ENCODE measurements at regions of chr11 and their contacts with region 1.

Region 1: GRCh38 chr11:77187776-77188632 is 60.0 kb downstream of the MYO7A start:
- H3K4me3 ChIP-seq: no peak overlapping the region
- H3K27ac ChIP-seq: no peak overlapping the region
- H3K4me1 ChIP-seq: no peaks in the 10 kb centered on the region
- CTCF ChIP-seq: peak; percentile 43; the same call in 1 of the 2 replicates

Region 2: DNA sequence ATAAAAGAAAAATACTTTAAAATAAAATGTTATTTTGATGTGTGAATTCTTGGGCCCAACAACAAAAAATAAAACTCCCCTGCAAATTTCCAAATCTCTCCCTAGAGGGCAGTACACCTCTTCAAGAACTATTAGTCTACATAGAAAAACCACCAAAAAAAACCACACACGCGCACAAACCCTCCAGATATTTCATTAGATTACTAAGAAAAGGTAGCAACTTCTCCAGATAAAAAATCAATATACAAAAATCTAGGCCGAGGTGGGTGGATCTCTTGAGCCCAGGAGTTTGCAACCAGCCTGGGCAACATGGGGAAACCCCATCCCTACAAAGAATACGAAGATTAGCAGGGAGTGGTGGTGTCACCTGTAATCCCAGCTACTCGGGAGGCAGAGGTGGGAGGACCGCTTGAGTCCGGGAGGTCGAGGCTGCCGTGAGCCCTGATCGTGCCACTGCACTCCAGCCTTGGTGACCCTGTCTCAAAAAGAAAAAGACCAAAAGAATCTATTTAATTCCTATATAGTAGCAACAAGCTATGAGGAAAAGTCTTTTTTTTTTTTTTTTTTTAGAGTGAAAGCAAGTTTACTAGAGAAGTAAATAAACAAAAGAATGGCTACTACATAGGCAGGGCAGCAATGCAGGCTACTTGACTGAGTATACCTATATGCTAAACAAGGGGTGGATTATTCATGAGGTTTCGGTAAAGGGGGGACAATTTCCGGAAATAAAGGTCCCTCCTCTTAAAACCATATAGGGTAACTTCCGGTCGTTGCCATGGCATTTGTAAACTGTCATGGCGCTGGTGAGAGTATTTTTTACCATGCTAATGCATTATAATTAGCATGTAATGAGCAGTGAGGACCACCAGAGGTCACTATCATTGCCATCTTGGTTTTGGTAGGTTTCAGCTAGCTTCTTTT is 140.7 kb before region 1 on chr11:
- CTCF ChIA-PET with region 1: interaction called, 12 read pairs
- POLR2A ChIA-PET with region 1: no interaction called
- H3K4me3 ChIP-seq: peak overlapping the region; percentile 36
- H3K27ac ChIP-seq: no peak overlapping the region
- H3K4me1 ChIP-seq: no peaks in the 10 kb centered on the region
- CTCF ChIP-seq: peak; percentile 54

Region 3: GRCh38 chr11:77167111-77167626 is 20.8 kb before region 1 on chr11:
- CTCF ChIA-PET with region 1: interaction called, 12 read pairs
- POLR2A ChIA-PET with region 1: no interaction called
- H3K4me3 ChIP-seq: no peak overlapping the region
- H3K27ac ChIP-seq: no peak overlapping the region
- H3K4me1 ChIP-seq: no peaks in the 10 kb centered on the region
- CTCF ChIP-seq: no peak

Region 4: GRCh38 chr11:77202941-77203900 is 15.2 kb after region 1 on chr11:
- CTCF ChIA-PET with region 1: interaction called, 14 read pairs
- POLR2A ChIA-PET with region 1: no interaction called
- H3K4me3 ChIP-seq: no peak overlapping the region
- H3K27ac ChIP-seq: no peak overlapping the region
- H3K4me1 ChIP-seq: no peaks in the 10 kb centered on the region
- CTCF ChIP-seq: no peak

Measured in HEK293 (cell line).